Mucosa of descending colon (tissue), 3 donors: ENCODE measurements at regions of chr17 and their contacts with region 1.

Region 1: DNA sequence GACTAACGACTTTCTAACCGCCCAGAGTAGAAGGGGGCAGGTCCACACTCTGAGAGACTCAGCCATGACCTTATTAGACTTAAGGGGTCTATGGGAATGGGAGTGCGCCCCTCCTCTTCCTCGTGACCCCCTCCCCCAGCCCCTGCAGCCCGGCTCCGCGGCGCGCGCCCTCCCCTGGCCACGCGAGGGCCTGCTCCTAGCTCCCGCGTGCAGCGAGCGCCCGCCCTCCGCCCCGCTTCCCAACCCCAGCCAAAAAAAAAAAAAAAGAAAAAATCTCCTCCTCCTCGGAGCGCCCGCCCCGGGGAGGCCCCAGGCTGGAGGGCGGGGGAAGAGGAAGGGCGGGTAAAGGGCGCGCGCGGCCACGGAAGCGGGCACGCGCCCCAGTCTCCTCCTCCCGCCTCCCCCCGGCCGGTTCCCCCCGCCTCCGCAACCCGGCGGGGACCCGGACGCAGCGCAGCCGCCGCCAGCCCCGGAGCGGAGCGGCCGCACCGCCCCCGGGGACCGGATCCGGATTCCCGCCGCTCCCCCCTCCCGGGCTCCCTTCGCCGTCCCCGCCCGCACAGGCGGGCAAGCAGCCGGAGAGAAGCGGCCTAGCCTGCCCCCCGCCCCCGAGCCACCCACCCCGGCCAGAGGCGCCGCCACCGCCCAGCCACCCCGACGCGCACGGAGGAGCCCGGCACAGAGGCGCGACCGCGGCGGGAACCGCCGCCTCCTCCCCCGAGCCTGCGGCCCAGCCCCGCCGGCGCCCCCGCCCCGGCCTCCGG is 949 bp downstream of the UBTF start:
- DNase-seq: peak; percentile 88 to 94 (median 93)
- ATAC-seq: peak; percentile 77
- H3K4me3 ChIP-seq: peak overlapping the region; percentile 95
- H3K4me1 ChIP-seq: peaks cover 25% of the 10 kb centered on the region
- CTCF ChIP-seq: peak; percentile 73

Region 2: GRCh38 chr17:44324571-44325275 is 106.2 kb after region 1 on chr17 and contains the start of gene SLC25A39:
- intact Hi-C with region 1: loop called in 1 of 2 experiments (anchors 5 kb)
- DNase-seq: peak; percentile 95 to 99 (median 97)
- ATAC-seq: peak; percentile 91
- H3K4me3 ChIP-seq: peak within 1 kb of the TSS; percentile 85
- H3K4me1 ChIP-seq: peaks cover 18% of the 10 kb centered on the region
- CTCF ChIP-seq: no peak
- total RNA-seq, gene SLC25A39: 91.8 to 142 (median 133) TPM

Region 3: GRCh38 chr17:44331249-44331760 is 112.8 kb after region 1 on chr17:
- intact Hi-C with region 1: loop called (anchors 5 to 10 kb)
- DNase-seq: peak in 1 of 3 donors; percentile 91
- ATAC-seq: peak; percentile 55
- H3K4me3 ChIP-seq: no peak overlapping the region
- H3K4me1 ChIP-seq: peaks cover 6% of the 10 kb centered on the region
- CTCF ChIP-seq: peak; percentile 57